ENCODE measurements at regions of chr12 and their contacts with region 1.

Region 1: DNA sequence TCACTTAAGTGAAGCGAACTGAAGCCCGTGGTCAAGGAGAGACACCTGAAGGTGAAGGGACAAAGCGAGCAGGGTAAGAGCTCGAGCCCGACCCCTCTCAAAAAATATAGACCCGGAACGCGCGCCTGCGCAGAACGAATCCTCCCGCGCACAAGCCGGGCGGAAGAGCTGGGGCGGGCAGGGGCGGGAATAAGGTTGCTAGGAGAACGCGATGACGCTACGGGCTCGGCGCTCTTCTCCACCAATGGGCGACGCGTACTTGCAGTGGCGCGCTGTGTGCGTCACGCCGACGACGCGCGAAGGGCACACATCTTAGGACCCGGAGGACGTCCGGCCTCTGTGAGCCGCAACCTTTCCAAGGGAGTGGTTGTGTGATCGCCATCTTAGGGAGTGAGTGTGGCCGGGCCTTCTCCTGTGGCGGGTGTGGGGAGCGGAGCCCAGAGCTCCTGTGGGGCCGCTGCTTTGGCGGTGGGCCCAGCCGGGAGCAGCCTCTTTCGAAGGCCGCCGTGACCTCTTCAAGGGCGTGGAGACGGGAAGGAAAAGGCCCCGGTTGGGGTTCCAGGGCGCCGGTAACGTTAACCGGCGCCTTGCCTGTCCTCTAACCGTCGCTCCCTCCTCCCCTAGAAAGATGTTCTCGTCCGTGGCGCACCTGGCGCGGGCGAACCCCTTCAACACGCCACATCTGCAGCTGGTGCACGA is at the start of gene SLC25A3:
- DNase-seq: peak; percentile 95 to 96
- H3K4me3 ChIP-seq: peak within 1 kb of the TSS; percentile 97
- H3K4me3 Mint-ChIP-seq: peak within 1 kb of the TSS; percentile 98
- H3K27ac Mint-ChIP-seq: peak within 1 kb of the TSS; percentile 98
- H3K4me1 ChIP-seq: peaks cover 17% of the 10 kb centered on the region
- H3K4me1 Mint-ChIP-seq: peaks cover 7% of the 10 kb centered on the region
- H3K27me3 ChIP-seq: no peaks in the 10 kb centered on the region
- H3K27me3 Mint-ChIP-seq: no peaks in the 10 kb centered on the region
- CTCF ChIP-seq: peak in 1 of 2 experiments; percentile 13
- total RNA-seq, gene SLC25A3: 888 and 920 TPM in 2 replicates

Region 2: DNA sequence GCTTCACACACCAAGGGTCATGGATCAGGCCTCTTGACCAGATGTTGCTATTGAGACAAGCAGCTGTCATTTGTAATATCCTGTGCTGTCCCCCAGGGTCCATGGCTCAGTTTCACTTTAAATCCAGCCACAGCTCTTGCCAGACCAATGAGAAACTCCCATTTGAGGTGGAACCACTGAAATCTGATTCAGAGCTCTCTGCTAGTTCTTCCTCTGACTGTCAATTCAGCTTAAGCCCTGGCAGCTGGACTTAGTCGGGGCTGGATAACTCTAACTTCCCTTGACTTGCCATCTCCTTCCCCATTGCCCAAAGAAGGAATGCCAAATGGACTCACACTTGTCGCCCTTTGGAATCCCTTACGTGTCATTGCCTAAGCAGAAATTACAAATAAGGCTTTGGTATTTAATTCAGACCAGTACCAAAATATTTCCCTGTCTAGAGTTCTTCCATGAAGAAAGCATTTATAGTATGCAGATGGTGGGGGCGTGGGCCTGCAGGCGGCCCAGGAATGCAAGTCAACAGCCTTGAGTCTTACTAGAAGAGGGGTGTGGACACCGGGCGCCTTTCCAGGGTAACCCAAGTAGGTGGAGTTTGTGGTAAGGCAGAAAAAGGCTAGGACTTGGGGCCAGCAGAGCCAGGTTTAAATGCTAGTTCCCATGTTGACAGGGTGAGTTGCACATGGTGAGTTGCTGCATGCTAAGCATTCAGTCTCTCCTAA is 175.0 kb before region 1 on chr12:
- CTCF ChIA-PET with region 1: no interaction called
- POLR2A ChIA-PET with region 1: interaction called, 5 read pairs
- intact Hi-C with region 1: loop called (anchors 2 kb)
- DNase-seq: peak; percentile 76 to 84
- H3K4me3 ChIP-seq: no peak overlapping the region
- H3K4me3 Mint-ChIP-seq: no peak overlapping the region
- H3K27ac Mint-ChIP-seq: peak overlapping the region; percentile 45
- H3K4me1 ChIP-seq: peaks cover 17% of the 10 kb centered on the region
- H3K4me1 Mint-ChIP-seq: peaks cover 28% of the 10 kb centered on the region
- H3K27me3 ChIP-seq: no peaks in the 10 kb centered on the region
- H3K27me3 Mint-ChIP-seq: no peaks in the 10 kb centered on the region
- CTCF ChIP-seq: no peak

Region 3: DNA sequence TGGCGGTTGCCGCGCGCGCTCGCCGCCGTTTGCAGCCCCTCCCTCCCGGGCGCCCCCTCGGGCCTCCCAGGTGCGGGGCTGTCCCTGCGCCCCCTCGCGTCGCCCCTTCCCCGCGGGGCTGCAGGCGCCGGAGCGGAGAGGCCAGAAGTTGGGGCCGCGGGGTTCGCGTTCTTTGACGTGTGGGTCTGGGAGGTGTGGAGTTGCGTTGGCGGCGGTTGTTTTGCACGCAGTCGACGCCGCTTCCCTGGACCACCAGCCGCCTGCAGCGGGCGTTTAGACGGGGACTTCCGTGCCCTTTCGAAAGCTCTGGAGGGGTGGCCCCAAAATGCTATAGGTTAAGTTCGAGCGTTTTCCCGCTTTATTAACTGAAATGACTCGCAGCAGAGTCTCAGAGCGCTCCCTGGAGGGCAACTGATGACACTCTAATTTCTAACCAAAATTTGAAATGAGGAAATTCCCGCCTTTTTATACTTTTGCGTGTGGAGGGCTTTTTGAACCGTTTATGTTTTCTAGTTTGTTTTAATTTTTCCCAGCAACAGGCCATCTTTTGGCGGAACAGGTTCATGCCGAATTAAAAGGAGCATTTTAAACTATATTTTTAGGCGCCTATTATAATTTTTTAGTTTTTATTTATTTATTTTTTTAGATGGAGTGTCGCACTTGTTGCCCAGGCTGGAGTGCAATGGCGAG is 77.2 kb before region 1 on chr12:
- CTCF ChIA-PET with region 1: no interaction called
- POLR2A ChIA-PET with region 1: interaction called, 16 read pairs
- intact Hi-C with region 1: loop called (anchors 2 kb)
- DNase-seq: peak; percentile 86 to 88
- H3K4me3 ChIP-seq: peak overlapping the region; percentile 99
- H3K4me3 Mint-ChIP-seq: peak overlapping the region; percentile 72
- H3K27ac Mint-ChIP-seq: peak overlapping the region; percentile 98
- H3K4me1 ChIP-seq: peaks cover 20% of the 10 kb centered on the region
- H3K4me1 Mint-ChIP-seq: peaks cover 15% of the 10 kb centered on the region
- H3K27me3 ChIP-seq: no peaks in the 10 kb centered on the region
- H3K27me3 Mint-ChIP-seq: no peaks in the 10 kb centered on the region
- CTCF ChIP-seq: peak; percentile 55 to 61

Region 4: GRCh38 chr12:98572010-98572409 is 21.5 kb before region 1 on chr12:
- CTCF ChIA-PET with region 1: interaction called, 54 read pairs
- POLR2A ChIA-PET with region 1: interaction called, 33 read pairs
- intact Hi-C with region 1: loop called (anchors 1 kb)
- DNase-seq: no peak
- H3K4me3 ChIP-seq: no peak overlapping the region
- H3K4me3 Mint-ChIP-seq: no peak overlapping the region
- H3K27ac Mint-ChIP-seq: no peak overlapping the region
- H3K4me1 ChIP-seq: peaks cover 44% of the 10 kb centered on the region
- H3K4me1 Mint-ChIP-seq: no peaks in the 10 kb centered on the region
- H3K27me3 ChIP-seq: no peaks in the 10 kb centered on the region
- H3K27me3 Mint-ChIP-seq: no peaks in the 10 kb centered on the region
- CTCF ChIP-seq: peak; percentile 19 to 27

Region 5: GRCh38 chr12:98644711-98645402 is 51.4 kb after region 1 on chr12 and contains the starts of genes APAF1 and IKBIP:
- CTCF ChIA-PET with region 1: interaction called, 3 read pairs
- POLR2A ChIA-PET with region 1: interaction called, 12 read pairs
- intact Hi-C with region 1: loop called (anchors 1 kb)
- DNase-seq: peak; percentile 94 to 98
- H3K4me3 ChIP-seq: peak within 1 kb of the TSS; percentile 95
- H3K4me3 Mint-ChIP-seq: peak within 1 kb of the TSS; percentile 86
- H3K27ac Mint-ChIP-seq: peak within 1 kb of the TSS; percentile 75
- H3K4me1 ChIP-seq: peaks cover 4% of the 10 kb centered on the region; the same call in 1 of the 2 replicates
- H3K4me1 Mint-ChIP-seq: peaks cover 7% of the 10 kb centered on the region
- H3K27me3 ChIP-seq: no peaks in the 10 kb centered on the region
- H3K27me3 Mint-ChIP-seq: no peaks in the 10 kb centered on the region
- CTCF ChIP-seq: no peak
- total RNA-seq, gene APAF1: 13.4 and 16.5 TPM in 2 replicates
- total RNA-seq, gene IKBIP: 9.9 and 10.9 TPM in 2 replicates

Region 6: GRCh38 chr12:98771811-98772752 is 178.6 kb after region 1 on chr12:
- CTCF ChIA-PET with region 1: no interaction called
- POLR2A ChIA-PET with region 1: no interaction called
- intact Hi-C with region 1: no loop called
- DNase-seq: no peak
- H3K4me3 ChIP-seq: no peak overlapping the region
- H3K4me3 Mint-ChIP-seq: no peak overlapping the region
- H3K27ac Mint-ChIP-seq: no peak overlapping the region
- H3K4me1 ChIP-seq: no peaks in the 10 kb centered on the region
- H3K4me1 Mint-ChIP-seq: no peaks in the 10 kb centered on the region
- H3K27me3 ChIP-seq: no peaks in the 10 kb centered on the region
- H3K27me3 Mint-ChIP-seq: peaks cover 2% of the 10 kb centered on the region
- CTCF ChIP-seq: no peak

Measured in Caco-2 (cell line).